ENCODE measurements at regions of chr6 and their contacts with region 1.

Region 1: GRCh38 chr6:151475653-151476523 is 17.9 kb upstream of the CCDC170 start:
- DNase-seq: peak in 6 of 9 experiments; percentile 29 to 72 (median 55)
- ATAC-seq: peak; percentile 34
- H3K4me3 ChIP-seq: no peak overlapping the region
- H3K4me3 Mint-ChIP-seq: no peak overlapping the region
- H3K27ac ChIP-seq: no peak overlapping the region
- H3K27ac Mint-ChIP-seq: no peak overlapping the region
- H3K4me1 ChIP-seq: no peaks in the 10 kb centered on the region
- H3K4me1 Mint-ChIP-seq: peaks cover 9% of the 10 kb centered on the region
- H3K27me3 ChIP-seq: no peaks in the 10 kb centered on the region
- H3K27me3 Mint-ChIP-seq: no peaks in the 10 kb centered on the region
- CTCF ChIP-seq: peak; percentile 85

Region 2: GRCh38 chr6:150891888-150892485 is 583.9 kb before region 1 on chr6:
- CTCF ChIA-PET with region 1: interaction called, 3 read pairs
- POLR2A ChIA-PET with region 1: no interaction called
- intact Hi-C with region 1: loop called in 1 of 2 experiments (anchors 2 kb)
- DNase-seq: peak; percentile 36 to 72 (median 58)
- ATAC-seq: peak; percentile 71
- H3K4me3 ChIP-seq: no peak overlapping the region
- H3K4me3 Mint-ChIP-seq: no peak overlapping the region
- H3K27ac ChIP-seq: no peak overlapping the region
- H3K27ac Mint-ChIP-seq: no peak overlapping the region
- H3K4me1 ChIP-seq: peaks cover 8% of the 10 kb centered on the region
- H3K4me1 Mint-ChIP-seq: peaks cover 15% of the 10 kb centered on the region
- H3K27me3 ChIP-seq: no peaks in the 10 kb centered on the region
- H3K27me3 Mint-ChIP-seq: no peaks in the 10 kb centered on the region
- CTCF ChIP-seq: peak; percentile 78

Region 3: DNA sequence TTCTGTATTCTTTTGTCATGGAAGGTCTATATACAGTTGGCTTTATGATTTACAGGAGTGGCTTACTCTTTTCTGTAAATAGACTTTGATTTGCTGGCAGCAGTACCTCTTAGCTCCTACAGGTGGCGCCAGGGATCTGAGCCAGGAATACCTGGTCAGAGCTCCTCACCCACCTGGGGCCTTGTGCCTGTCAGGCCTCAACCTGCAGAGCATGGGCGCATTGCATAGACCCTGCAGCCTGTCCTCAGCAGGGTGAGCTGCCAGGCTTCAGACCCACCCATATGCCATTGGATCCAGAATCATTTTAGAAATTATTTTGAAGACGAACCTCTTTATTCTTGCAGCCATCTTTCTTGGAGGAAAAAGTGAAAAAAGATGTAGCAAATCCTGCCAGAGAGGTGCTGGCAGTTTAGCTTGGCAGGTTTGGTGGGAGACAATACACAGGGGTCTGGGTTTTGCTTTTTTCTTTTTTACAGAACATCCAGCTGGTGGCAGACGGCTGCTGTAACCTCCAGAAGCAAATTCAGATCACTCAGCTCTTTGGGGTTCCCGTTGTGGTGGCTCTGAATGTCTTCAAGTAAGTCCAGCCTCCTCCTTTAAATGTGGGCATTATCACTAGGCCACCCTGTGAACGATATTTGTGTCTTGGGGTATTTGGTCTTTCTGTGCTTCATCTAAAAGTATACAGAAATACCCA is 461.3 kb before region 1 on chr6:
- CTCF ChIA-PET with region 1: no interaction called
- POLR2A ChIA-PET with region 1: no interaction called
- intact Hi-C with region 1: loop called (anchors 1 to 5 kb)
- DNase-seq: peak; percentile 12 to 74 (median 57)
- ATAC-seq: peak; percentile 77
- H3K4me3 ChIP-seq: no peak overlapping the region
- H3K4me3 Mint-ChIP-seq: peak overlapping the region; percentile 27
- H3K27ac ChIP-seq: no peak overlapping the region
- H3K27ac Mint-ChIP-seq: no peak overlapping the region
- H3K4me1 ChIP-seq: no peaks in the 10 kb centered on the region
- H3K4me1 Mint-ChIP-seq: peaks cover 3% of the 10 kb centered on the region
- H3K27me3 ChIP-seq: no peaks in the 10 kb centered on the region
- H3K27me3 Mint-ChIP-seq: no peaks in the 10 kb centered on the region
- CTCF ChIP-seq: peak; percentile 94

Region 4: GRCh38 chr6:151240036-151240685 is 235.7 kb before region 1 on chr6:
- CTCF ChIA-PET with region 1: no interaction called
- POLR2A ChIA-PET with region 1: no interaction called
- intact Hi-C with region 1: no loop called
- DNase-seq: peak in 1 of 9 experiments; percentile 1
- ATAC-seq: no peak
- H3K4me3 ChIP-seq: no peak overlapping the region
- H3K4me3 Mint-ChIP-seq: no peak overlapping the region
- H3K27ac ChIP-seq: no peak overlapping the region
- H3K27ac Mint-ChIP-seq: no peak overlapping the region
- H3K4me1 ChIP-seq: no peaks in the 10 kb centered on the region
- H3K4me1 Mint-ChIP-seq: peaks cover 14% of the 10 kb centered on the region
- H3K27me3 ChIP-seq: peaks cover 3 to 6% of the 10 kb centered on the region in 2 experiments
- H3K27me3 Mint-ChIP-seq: peaks cover 55% of the 10 kb centered on the region
- CTCF ChIP-seq: no peak

Region 5: DNA sequence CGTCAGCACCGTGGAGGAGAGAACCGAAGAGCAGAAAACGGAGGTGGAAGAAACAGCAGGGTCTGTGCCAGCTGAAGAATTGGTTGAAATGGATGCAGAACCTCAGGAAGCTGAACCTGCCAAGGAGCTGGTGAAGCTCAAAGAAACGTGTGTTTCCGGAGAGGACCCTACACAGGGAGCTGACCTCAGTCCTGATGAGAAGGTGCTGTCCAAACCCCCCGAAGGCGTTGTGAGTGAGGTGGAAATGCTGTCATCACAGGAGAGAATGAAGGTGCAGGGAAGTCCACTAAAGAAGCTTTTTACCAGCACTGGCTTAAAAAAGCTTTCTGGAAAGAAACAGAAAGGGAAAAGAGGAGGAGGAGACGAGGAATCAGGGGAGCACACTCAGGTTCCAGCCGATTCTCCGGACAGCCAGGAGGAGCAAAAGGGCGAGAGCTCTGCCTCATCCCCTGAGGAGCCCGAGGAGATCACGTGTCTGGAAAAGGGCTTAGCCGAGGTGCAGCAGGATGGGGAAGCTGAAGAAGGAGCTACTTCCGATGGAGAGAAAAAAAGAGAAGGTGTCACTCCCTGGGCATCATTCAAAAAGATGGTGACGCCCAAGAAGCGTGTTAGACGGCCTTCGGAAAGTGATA is 126.1 kb before region 1 on chr6:
- CTCF ChIA-PET with region 1: interaction called, 3 read pairs
- POLR2A ChIA-PET with region 1: no interaction called
- intact Hi-C with region 1: loop called in 1 of 2 experiments (anchors 1 kb)
- DNase-seq: peak in 1 of 9 experiments; percentile 19
- ATAC-seq: no peak
- H3K4me3 ChIP-seq: no peak overlapping the region
- H3K4me3 Mint-ChIP-seq: no peak overlapping the region
- H3K27ac ChIP-seq: no peak overlapping the region
- H3K27ac Mint-ChIP-seq: no peak overlapping the region
- H3K4me1 ChIP-seq: no peaks in the 10 kb centered on the region
- H3K4me1 Mint-ChIP-seq: no peaks in the 10 kb centered on the region
- H3K27me3 ChIP-seq: no peaks in the 10 kb centered on the region
- H3K27me3 Mint-ChIP-seq: no peaks in the 10 kb centered on the region
- CTCF ChIP-seq: no peak

Region 6: GRCh38 chr6:151403919-151404308 is 72.0 kb before region 1 on chr6:
- CTCF ChIA-PET with region 1: interaction called, 15 read pairs
- POLR2A ChIA-PET with region 1: no interaction called
- intact Hi-C with region 1: loop called (anchors 1 to 2 kb)
- DNase-seq: no peak
- ATAC-seq: no peak
- H3K4me3 ChIP-seq: no peak overlapping the region
- H3K4me3 Mint-ChIP-seq: no peak overlapping the region
- H3K27ac ChIP-seq: no peak overlapping the region
- H3K27ac Mint-ChIP-seq: peak overlapping the region; percentile 56
- H3K4me1 ChIP-seq: peaks cover 19% of the 10 kb centered on the region
- H3K4me1 Mint-ChIP-seq: peaks cover 54% of the 10 kb centered on the region
- H3K27me3 ChIP-seq: no peaks in the 10 kb centered on the region
- H3K27me3 Mint-ChIP-seq: no peaks in the 10 kb centered on the region
- CTCF ChIP-seq: no peak

Region 7: DNA sequence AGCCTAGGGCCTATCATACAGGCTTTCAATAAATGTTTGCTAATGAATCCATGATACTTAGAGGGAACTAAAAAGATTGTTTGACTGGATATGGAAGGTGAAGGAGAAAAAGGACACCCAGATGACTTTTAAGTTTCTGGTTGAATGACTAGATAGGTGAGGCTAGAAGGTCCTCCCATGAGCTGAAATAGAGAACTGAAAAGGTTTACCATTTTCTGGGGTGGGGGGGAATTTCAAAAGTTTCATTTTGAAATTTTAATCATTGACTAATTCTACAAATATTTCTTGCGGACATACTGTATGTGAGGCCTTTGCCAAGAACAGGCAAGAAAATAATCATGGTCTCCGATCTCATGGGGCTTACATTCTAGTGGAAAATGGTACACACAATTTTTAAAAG is 66.6 kb before region 1 on chr6:
- CTCF ChIA-PET with region 1: interaction called, 15 read pairs
- POLR2A ChIA-PET with region 1: no interaction called
- intact Hi-C with region 1: loop called (anchors 1 to 2 kb)
- DNase-seq: no peak
- ATAC-seq: no peak
- H3K4me3 ChIP-seq: no peak overlapping the region
- H3K4me3 Mint-ChIP-seq: no peak overlapping the region
- H3K27ac ChIP-seq: no peak overlapping the region
- H3K27ac Mint-ChIP-seq: peak overlapping the region; percentile 62
- H3K4me1 ChIP-seq: peaks cover 14% of the 10 kb centered on the region
- H3K4me1 Mint-ChIP-seq: peaks cover 34% of the 10 kb centered on the region
- H3K27me3 ChIP-seq: no peaks in the 10 kb centered on the region
- H3K27me3 Mint-ChIP-seq: no peaks in the 10 kb centered on the region
- CTCF ChIP-seq: no peak

Region 8: GRCh38 chr6:151425561-151425960 is 50.3 kb before region 1 on chr6:
- CTCF ChIA-PET with region 1: no interaction called
- POLR2A ChIA-PET with region 1: no interaction called
- intact Hi-C with region 1: no loop called
- DNase-seq: no peak
- ATAC-seq: no peak
- H3K4me3 ChIP-seq: no peak overlapping the region
- H3K4me3 Mint-ChIP-seq: no peak overlapping the region
- H3K27ac ChIP-seq: no peak overlapping the region
- H3K27ac Mint-ChIP-seq: no peak overlapping the region
- H3K4me1 ChIP-seq: no peaks in the 10 kb centered on the region
- H3K4me1 Mint-ChIP-seq: no peaks in the 10 kb centered on the region
- H3K27me3 ChIP-seq: no peaks in the 10 kb centered on the region
- H3K27me3 Mint-ChIP-seq: no peaks in the 10 kb centered on the region
- CTCF ChIP-seq: no peak

Region 9: DNA sequence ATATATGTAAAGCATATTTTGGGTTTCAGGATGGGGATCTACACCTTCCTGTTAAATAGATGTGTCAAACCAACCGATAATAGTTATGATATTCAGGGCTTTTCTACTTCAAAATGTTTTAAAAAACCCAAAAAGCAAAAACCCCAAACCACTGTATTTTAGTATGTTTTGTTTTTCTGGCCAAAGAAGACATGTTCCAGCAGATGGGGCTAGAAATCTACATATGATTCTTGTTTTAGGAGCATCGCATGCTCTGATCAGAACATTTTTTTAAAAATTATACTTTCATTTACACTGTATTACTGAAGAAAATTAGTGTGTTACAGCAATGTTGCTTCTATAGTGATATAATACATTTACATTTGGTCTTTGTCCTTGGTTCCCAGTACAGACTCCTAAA is 35.0 kb before region 1 on chr6:
- CTCF ChIA-PET with region 1: interaction called, 15 read pairs
- POLR2A ChIA-PET with region 1: no interaction called
- intact Hi-C with region 1: loop called (anchors 1 kb)
- DNase-seq: peak in 2 of 9 experiments; percentile 55 to 67
- ATAC-seq: peak; percentile 52
- H3K4me3 ChIP-seq: no peak overlapping the region
- H3K4me3 Mint-ChIP-seq: no peak overlapping the region
- H3K27ac ChIP-seq: peak overlapping the region in 1 of 2 experiments; percentile 23
- H3K27ac Mint-ChIP-seq: no peak overlapping the region
- H3K4me1 ChIP-seq: peaks cover 16% of the 10 kb centered on the region
- H3K4me1 Mint-ChIP-seq: peaks cover 47% of the 10 kb centered on the region
- H3K27me3 ChIP-seq: no peaks in the 10 kb centered on the region
- H3K27me3 Mint-ChIP-seq: no peaks in the 10 kb centered on the region
- CTCF ChIP-seq: peak; percentile 69

Region 10: DNA sequence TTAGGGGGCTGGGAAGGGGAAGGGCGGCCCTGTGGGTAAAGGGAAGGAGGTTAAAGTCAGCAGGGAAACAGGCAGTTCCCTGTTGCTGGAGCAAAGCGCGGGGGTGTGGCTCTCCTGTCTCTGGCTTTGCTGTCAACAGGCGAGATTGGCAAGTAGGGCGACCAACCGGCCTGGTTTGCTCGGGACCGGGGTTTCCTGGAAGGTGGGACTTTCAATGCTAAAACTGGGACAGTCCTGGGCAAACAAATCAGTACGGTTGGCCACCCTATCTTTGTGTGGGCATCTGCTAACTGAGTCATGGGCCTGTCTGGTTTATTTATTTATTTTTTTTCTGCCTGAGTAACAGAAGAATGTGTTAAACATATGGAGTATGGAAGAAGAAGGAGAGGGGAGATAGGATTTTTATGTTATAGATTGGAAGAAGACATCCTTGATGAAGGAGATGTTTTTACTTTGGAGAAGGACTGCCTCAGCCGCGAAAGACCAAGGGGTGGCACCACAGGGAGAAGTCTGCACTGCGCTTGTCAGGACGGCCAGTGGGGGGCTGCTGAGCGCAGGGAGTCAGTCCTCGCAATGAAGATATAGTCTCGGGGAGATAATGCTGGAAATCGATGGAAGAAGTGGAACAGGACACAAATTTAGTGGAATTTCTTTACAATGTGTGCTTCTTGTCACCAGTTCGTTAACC is 288.2 kb after region 1 on chr6:
- CTCF ChIA-PET with region 1: no interaction called
- POLR2A ChIA-PET with region 1: no interaction called
- intact Hi-C with region 1: no loop called
- DNase-seq: peak in 6 of 9 experiments; percentile 15 to 50 (median 25)
- ATAC-seq: peak; percentile 57
- H3K4me3 ChIP-seq: no peak overlapping the region
- H3K4me3 Mint-ChIP-seq: peak overlapping the region; percentile 55
- H3K27ac ChIP-seq: no peak overlapping the region
- H3K27ac Mint-ChIP-seq: no peak overlapping the region
- H3K4me1 ChIP-seq: no peaks in the 10 kb centered on the region
- H3K4me1 Mint-ChIP-seq: peaks cover 5% of the 10 kb centered on the region
- H3K27me3 ChIP-seq: no peaks in the 10 kb centered on the region
- H3K27me3 Mint-ChIP-seq: peaks cover 6% of the 10 kb centered on the region
- CTCF ChIP-seq: no peak

Region 11: DNA sequence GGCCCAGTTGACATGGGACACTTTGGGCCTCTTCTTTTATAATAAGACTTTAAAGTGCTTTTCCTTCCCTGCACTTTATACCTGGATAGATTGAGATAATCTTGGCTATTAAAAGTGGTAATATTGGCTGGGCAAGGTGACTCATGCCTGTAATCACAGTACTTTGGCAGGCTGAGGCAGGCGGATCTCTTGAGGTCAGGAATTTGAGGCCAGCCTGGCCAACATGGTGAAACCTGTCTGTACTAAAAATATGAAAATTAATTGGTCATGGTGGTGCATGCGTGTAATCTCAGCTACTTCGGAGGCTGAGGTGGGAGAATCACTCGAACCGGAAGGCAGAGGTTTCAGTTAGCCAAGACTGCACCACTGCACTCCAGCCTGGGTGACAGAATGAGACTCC is 1852.3 kb after region 1 on chr6:
- CTCF ChIA-PET with region 1: no interaction called
- POLR2A ChIA-PET with region 1: no interaction called
- intact Hi-C with region 1: no loop called
- DNase-seq: no peak
- ATAC-seq: no peak
- H3K4me3 ChIP-seq: no peak overlapping the region
- H3K4me3 Mint-ChIP-seq: no peak overlapping the region
- H3K27ac ChIP-seq: no peak overlapping the region
- H3K27ac Mint-ChIP-seq: no peak overlapping the region
- H3K4me1 ChIP-seq: no peaks in the 10 kb centered on the region
- H3K4me1 Mint-ChIP-seq: no peaks in the 10 kb centered on the region
- H3K27me3 ChIP-seq: no peaks in the 10 kb centered on the region
- H3K27me3 Mint-ChIP-seq: no peaks in the 10 kb centered on the region
- CTCF ChIP-seq: no peak

Measured in CD8-positive, alpha-beta T cell (primary cell).